Common myeloid progenitor, CD34-positive (primary cell): ENCODE measurements at regions of chr12 and their contacts with region 1.

Region 1: GRCh38 chr12:47837190-47838171 is 17.8 kb upstream of the HDAC7 start:
- DNase-seq: peak; percentile 65 to 75 (median 67)
- H3K4me3 ChIP-seq: no peak overlapping the region
- H3K27ac ChIP-seq: no peak overlapping the region
- H3K4me1 ChIP-seq: peaks cover 10 to 49% (median 44%) of the 10 kb centered on the region in 4 experiments
- H3K27me3 ChIP-seq: no peaks in the 10 kb centered on the region

Region 2: DNA sequence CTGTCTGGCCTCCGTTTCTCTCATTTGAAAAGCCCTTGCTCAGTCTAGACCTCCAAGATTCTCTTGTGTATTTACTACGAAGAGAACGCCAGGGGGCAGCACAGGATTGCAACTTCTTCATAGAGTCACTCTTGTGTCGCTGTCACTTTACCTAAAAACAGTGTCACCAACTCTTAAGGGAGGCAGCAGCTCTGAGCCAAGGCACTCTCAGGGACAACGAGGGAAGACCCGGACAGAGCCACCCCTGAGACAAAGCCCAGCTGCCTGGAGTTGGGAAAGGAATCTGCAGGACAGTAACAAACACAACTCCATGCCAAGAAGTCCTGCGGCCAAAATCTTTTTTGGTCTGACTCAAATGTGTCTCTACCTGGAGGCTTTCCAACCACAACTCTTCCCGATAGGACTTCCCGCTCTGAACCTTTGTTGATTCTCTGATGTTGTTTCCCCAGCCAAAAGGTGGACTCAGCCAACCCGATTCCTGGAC is 122.0 kb before region 1 on chr12:
- CTCF ChIA-PET with region 1: interaction called, 208 read pairs
- POLR2A ChIA-PET with region 1: no interaction called
- DNase-seq: peak; percentile 84 to 93 (median 89)
- H3K4me3 ChIP-seq: no peak overlapping the region
- H3K27ac ChIP-seq: no peak overlapping the region
- H3K4me1 ChIP-seq: peaks cover 4 to 33% (median 23%) of the 10 kb centered on the region in 4 experiments
- H3K27me3 ChIP-seq: no peaks in the 10 kb centered on the region

Region 3: DNA sequence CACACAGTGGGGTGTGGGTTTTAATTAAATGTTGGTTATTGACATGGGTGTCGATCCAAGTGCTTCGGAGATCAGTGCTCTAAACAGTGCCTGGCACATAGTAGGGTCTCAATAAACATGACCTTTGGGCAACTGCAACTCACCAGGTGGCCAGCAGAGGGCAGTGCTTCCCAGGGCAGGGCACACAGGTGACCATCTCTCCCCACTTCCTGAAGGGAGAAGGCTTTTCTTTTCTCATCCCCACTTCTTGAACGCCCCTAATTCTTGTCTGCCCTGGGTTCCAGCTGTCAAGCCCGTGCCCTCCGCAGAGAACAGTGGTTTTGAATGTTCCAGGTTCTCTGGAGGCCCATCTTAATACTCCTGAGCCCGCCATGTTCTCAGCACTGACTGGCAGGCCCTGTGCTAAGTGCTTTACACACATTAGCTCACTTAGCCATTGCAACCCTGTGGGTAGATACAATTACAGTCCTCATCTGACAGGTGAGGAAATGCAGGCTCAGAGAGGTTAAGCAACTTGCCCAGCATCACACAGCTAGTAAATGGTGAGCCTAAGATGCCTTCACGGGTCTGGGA is 95.1 kb before region 1 on chr12:
- CTCF ChIA-PET with region 1: interaction called, 143 read pairs
- POLR2A ChIA-PET with region 1: interaction called, 3 read pairs
- DNase-seq: peak; percentile 41 to 47 (median 42)
- H3K4me3 ChIP-seq: no peak overlapping the region
- H3K27ac ChIP-seq: no peak overlapping the region
- H3K4me1 ChIP-seq: peaks cover 4 to 32% (median 21%) of the 10 kb centered on the region in 4 experiments
- H3K27me3 ChIP-seq: no peaks in the 10 kb centered on the region

Region 4: DNA sequence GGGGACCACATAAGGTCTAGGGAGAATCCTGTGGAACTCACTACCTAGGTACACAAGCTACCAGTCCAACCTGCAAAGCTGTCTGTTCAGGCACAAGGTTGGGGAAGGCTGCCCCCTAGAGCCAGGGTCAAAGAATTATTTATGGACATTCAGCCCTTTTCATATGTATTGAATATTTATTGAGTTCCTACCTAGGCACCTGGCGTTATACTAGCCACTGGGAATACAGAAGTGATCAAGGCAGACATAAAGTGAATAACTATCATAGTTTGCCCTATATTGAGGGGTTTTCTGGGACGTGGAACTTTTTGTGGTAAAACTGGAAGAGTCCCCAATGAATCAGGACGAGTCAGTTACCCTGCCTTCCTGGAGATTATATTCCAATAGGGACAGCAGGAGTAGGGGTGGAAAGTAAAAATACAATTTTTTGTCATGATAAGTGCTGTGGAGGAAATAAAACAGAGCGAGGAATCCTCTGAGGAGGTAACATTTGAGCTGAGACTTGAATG is 70.2 kb before region 1 on chr12:
- CTCF ChIA-PET with region 1: interaction called, 27 read pairs
- POLR2A ChIA-PET with region 1: interaction called, 5 read pairs
- DNase-seq: peak; percentile 75 to 86 (median 80)
- H3K4me3 ChIP-seq: no peak overlapping the region
- H3K27ac ChIP-seq: no peak overlapping the region
- H3K4me1 ChIP-seq: peaks cover 4 to 44% (median 26%) of the 10 kb centered on the region in 4 experiments
- H3K27me3 ChIP-seq: no peaks in the 10 kb centered on the region

Region 5: DNA sequence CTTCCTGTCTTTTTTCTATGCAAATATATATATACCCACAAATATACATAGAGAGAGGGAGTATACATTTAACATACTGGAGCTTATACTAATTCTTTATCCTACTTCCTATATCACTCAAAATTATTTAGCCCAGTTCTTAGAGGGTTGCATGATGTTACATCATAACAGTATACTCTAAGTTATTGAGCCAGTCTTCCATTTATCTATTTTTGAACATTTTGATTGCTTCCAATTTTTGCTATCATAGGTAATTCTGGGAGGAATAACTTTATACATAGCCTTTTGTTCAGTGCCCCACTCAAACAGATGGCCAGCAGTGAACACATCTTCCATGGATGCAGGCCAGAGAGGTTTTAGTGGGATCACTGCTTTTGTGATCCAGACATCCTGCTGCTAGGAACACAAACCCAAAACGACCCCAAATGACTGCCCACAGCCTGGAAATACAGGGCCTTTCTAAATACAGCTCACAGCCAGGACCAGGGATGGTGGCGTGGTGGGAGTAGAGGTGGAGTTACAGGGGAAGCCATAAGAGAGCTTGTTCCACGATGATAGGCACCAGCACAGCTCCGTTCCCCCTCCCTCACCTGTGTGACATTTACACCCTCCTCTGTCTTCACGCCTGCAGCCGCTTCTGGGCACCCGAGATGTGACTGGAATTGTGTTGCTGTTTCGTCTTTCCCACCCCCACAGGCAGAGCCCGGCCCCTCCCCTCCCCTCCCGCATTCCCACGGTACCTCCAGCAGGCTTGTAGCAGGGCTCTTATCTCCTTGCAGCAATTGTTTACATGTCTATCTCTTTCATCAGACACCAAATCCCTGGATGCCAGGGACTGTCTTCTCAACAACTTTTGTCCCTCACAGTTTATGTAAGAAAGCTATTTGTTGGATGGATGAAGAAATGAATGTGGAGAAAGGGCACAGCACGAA is 12.9 kb after region 1 on chr12:
- CTCF ChIA-PET with region 1: interaction called, 12 read pairs
- POLR2A ChIA-PET with region 1: no interaction called
- DNase-seq: no peak
- H3K4me3 ChIP-seq: no peak overlapping the region
- H3K27ac ChIP-seq: no peak overlapping the region
- H3K4me1 ChIP-seq: no peaks in the 10 kb centered on the region
- H3K27me3 ChIP-seq: no peaks in the 10 kb centered on the region